Activated T-helper 2 cell treated with anti-CD3 and anti-CD28 coated beads, Interferon-gamma antibody, Interleukin-2, Interleukin-4, amounts not matched to agents 10 μg/mL and 5 μg/mL and 100 μg/mL, durations not matched to agents 14 hours and 24 hours and 36 hours (primary cell): ENCODE measurements at regions of chr18 and their contacts with region 1.

Region 1: GRCh38 chr18:51197661-51198424 is at the start of gene MEX3C:
- DNase-seq: peak; percentile 99
- H3K4me3 Mint-ChIP-seq: peak within 1 kb of the TSS; percentile 95
- H3K27ac Mint-ChIP-seq: peak within 1 kb of the TSS; percentile 96
- H3K4me1 Mint-ChIP-seq: peaks cover 27% of the 10 kb centered on the region
- H3K27me3 Mint-ChIP-seq: no peaks in the 10 kb centered on the region
- total RNA-seq, gene MEX3C: 48.6 and 49.3 TPM in 2 replicates

Region 2: DNA sequence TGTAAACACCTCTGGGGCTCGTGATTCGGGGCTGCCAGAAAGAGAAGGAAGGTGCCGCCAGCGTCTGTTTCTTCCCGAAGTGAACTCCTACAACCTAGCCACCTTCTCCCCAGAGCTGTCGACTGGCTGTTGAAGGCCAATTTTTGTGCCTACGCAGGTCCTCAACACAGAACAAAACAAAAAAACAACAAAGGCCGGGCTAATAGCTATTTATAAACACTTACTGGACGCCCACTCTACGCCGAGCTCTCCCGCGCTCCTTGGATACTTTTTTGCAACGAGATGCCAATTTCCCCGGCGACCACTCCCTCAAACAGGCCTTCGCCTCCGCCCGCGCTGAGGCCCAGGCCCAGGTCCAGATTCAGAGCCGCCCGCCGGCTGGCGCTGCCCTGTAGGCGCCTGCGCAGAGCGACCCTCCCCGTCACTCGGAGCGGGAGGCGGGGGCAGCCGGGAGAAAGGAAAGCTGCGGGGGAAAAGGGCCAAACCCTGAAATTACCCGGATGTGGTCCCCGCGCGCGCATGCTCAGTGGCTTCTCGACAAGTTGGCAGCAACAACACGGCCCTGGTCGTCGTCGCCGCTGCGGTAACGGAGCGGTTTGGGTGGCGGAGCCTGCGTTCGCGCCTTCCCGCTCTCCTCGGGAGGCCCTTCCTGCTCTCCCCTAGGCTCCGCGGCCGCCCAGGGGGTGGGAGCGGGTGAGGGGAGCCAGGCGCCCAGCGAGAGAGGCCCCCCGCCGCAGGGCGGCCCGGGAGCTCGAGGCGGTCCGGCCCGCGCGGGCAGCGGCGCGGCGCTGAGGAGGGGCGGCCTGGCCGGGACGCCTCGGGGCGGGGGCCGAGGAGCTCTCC is 167.9 kb before region 1 on chr18 and contains the start of gene SMAD4:
- intact Hi-C with region 1: loop called (anchors 5 kb)
- DNase-seq: peak; percentile 97
- H3K4me3 Mint-ChIP-seq: peak within 1 kb of the TSS; percentile 97
- H3K27ac Mint-ChIP-seq: peak within 1 kb of the TSS; percentile 92
- H3K4me1 Mint-ChIP-seq: peaks cover 44% of the 10 kb centered on the region
- H3K27me3 Mint-ChIP-seq: no peaks in the 10 kb centered on the region
- total RNA-seq, gene SMAD4: 73.0 and 77.1 TPM in 2 replicates

Region 3: GRCh38 chr18:51153659-51154371 is 44.0 kb before region 1 on chr18:
- intact Hi-C with region 1: loop called (anchors 1 kb)
- DNase-seq: peak; percentile 30
- H3K4me3 Mint-ChIP-seq: peak overlapping the region; percentile 76
- H3K27ac Mint-ChIP-seq: peak overlapping the region; percentile 96
- H3K4me1 Mint-ChIP-seq: peaks cover 48% of the 10 kb centered on the region
- H3K27me3 Mint-ChIP-seq: no peaks in the 10 kb centered on the region